Activated naive CD4-positive, alpha-beta T cell treated with anti-CD3 and anti-CD28 coated beads for 36 hours (primary cell): ENCODE measurements at regions of chr18 and their contacts with region 1.

Region 1: GRCh38 chr18:46917108-46917802 is at the starts of genes KATNAL2 and PIAS2:
- DNase-seq: peak; percentile 71
- H3K4me3 Mint-ChIP-seq: peak within 1 kb of the TSS; percentile 86
- H3K27ac Mint-ChIP-seq: peak within 1 kb of the TSS; percentile 86
- H3K4me1 Mint-ChIP-seq: peaks cover 48% of the 10 kb centered on the region
- H3K27me3 Mint-ChIP-seq: no peaks in the 10 kb centered on the region
- total RNA-seq, gene KATNAL2: 0.45 to 0.52 TPM
- total RNA-seq, gene PIAS2: 21.9 to 23.4 TPM

Region 2: DNA sequence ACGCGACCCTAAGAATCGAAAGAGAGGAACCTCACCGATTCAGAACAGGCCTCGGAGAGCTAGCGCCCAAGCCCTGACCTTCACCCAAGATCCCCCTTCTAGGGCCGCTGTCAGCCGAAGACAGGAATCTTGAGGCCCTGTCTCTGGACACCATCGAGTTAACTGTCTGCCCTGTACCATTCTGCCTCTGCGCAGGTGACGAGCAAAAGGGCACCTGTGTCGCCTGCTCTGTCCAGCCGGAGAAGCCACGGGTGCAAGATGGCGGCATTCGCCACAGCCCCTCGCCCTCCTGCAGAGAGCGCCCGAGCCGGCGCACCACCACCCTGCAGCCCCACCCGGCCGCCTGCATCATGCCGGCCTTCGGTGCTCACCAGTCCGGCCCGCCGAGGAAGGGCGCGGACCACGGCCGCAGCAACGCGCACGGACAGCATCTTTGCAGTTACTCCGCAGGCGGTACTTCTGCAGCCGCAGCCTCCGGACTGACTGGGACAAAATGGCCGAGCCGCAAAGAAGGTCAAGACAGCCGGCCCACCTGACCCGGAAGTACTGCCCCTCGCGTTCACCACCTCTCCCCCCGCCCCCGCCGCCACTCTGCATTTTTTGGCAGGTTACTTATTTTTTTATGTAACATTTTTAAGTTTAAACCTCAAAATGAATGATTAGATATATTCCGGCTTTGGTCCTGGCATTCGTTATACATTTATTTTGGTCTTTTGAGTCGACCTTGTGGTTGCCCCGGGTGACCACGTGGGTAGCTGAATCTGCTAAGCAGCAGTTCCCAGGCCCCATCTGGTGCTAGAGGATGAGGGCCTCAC is 819.2 kb before region 1 on chr18 and contains the start of gene ATP5F1A:
- CTCF ChIA-PET with region 1: no interaction called
- intact Hi-C with region 1: loop called (anchors 5 kb)
- DNase-seq: peak; percentile 93
- H3K4me3 Mint-ChIP-seq: peak within 1 kb of the TSS; percentile 98
- H3K27ac Mint-ChIP-seq: peak within 1 kb of the TSS; percentile 94
- H3K4me1 Mint-ChIP-seq: peaks cover 36% of the 10 kb centered on the region
- H3K27me3 Mint-ChIP-seq: no peaks in the 10 kb centered on the region
- total RNA-seq, gene ATP5F1A: 467 TPM

Region 3: DNA sequence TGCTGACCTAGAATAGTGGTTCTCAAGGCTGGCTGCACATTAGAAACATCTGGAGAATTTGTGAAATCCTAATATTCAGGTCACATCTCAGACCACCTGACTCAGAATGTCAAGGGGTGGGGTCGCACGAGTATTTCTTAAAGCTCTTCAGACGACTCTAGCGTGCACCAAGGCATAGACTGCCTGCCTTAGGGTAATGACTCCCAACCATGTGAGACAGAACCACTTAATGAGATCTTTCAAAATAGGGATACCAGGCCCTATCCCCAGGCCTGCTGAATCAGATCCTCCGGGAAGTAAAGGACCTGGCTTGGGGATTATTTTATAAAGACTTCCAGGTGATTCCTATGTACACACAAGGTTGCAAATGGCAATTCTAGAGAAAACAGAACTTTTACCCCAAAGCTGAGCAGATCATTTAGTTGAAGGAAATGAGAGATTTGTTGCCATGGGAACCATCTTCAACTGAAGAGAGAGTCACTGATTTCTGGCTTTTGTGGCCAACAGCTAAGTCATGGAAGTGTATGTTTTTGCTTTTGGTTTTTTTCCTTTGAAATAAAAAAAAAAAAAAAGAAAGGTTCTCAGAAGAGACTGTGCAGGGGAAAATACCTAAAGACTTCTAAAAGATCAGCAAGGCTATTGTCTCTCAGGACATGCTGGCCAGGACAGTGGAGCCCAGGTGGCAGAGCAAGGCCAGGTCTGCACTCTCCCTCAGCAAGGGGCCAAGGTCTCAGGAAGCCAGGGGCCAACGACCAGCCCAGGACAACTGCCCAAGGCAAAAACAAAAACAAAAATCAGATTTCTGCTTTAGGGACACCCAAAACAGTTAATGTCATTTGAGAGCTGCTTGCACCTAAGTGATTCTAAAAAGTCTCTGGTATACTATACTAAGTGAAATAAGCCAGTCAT is 244.9 kb before region 1 on chr18:
- CTCF ChIA-PET with region 1: no interaction called
- intact Hi-C with region 1: loop called (anchors 2 kb)
- DNase-seq: peak; percentile 26
- H3K4me3 Mint-ChIP-seq: no peak overlapping the region
- H3K27ac Mint-ChIP-seq: no peak overlapping the region
- H3K4me1 Mint-ChIP-seq: peaks cover 11% of the 10 kb centered on the region
- H3K27me3 Mint-ChIP-seq: no peaks in the 10 kb centered on the region

Region 4: DNA sequence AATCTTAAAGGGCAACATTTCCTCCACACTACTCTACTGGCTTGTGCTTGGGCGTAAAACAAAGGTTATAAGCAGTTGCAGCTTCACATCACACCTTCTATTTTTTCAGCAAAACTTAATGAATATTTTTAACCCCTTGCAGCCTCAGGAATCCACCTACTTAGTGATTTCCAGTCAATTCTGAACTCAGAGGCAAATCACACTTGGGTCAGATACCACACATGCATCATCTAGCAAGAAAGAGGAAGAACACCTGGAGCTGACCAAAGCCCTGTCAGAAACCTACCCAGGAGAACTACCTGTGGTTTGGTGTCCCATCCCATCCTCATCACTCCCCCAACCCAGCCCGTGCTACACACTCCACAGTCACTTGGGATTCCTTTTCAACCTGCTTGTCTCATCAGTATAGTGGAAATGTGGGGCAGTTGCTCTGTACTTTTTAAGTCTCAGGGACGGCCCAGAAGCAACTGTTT is 25.5 kb before region 1 on chr18:
- CTCF ChIA-PET with region 1: no interaction called
- intact Hi-C with region 1: loop called (anchors 1 kb)
- DNase-seq: peak; percentile 43
- H3K4me3 Mint-ChIP-seq: no peak overlapping the region
- H3K27ac Mint-ChIP-seq: peak overlapping the region; percentile 30
- H3K4me1 Mint-ChIP-seq: peaks cover 42% of the 10 kb centered on the region
- H3K27me3 Mint-ChIP-seq: no peaks in the 10 kb centered on the region

Region 5: DNA sequence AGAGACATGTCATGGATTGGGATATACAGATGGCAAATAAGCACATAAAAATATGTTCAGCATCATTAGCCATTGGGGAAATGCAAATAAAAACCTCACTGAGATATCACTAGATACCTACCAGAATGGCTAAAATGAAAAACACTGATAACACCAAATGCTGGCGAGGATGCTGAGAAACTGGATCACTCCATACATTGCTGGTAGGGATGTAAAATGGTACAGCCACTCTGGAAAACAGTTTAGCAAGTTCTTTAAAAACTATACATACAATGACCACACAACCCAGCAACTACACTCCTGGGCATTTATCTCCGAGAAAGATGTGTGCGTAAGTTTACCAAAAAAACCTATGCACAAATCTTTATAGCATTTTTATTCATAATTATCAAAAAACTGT is 13.8 kb before region 1 on chr18:
- CTCF ChIA-PET with region 1: no interaction called
- intact Hi-C with region 1: no loop called
- DNase-seq: no peak
- H3K4me3 Mint-ChIP-seq: no peak overlapping the region
- H3K27ac Mint-ChIP-seq: no peak overlapping the region
- H3K4me1 Mint-ChIP-seq: peaks cover 22% of the 10 kb centered on the region
- H3K27me3 Mint-ChIP-seq: no peaks in the 10 kb centered on the region

Region 6: DNA sequence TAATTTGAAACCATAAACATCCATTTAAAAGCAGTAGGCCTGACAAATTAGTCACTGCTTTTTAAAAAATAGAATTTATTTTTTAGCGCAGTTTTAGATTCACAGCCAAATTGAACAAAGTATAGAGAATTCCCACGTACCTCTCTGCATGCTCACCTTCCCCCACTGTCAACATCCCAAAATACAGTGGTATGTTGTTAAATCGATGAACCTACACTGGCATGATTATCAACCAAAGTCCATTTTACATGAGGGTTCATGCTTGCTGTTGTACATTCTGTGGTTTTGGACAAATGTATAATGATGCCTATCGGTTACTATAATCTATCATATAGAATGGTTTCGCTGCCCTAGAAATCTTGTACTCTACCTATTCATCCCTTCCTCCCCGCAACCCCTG is 123.7 kb after region 1 on chr18:
- CTCF ChIA-PET with region 1: no interaction called
- intact Hi-C with region 1: no loop called
- DNase-seq: no peak
- H3K4me3 Mint-ChIP-seq: no peak overlapping the region
- H3K27ac Mint-ChIP-seq: no peak overlapping the region
- H3K4me1 Mint-ChIP-seq: no peaks in the 10 kb centered on the region
- H3K27me3 Mint-ChIP-seq: peaks cover 5% of the 10 kb centered on the region

Region 7: GRCh38 chr18:47150029-47150823 is 233.0 kb after region 1 on chr18 and contains the start of gene HDHD2:
- CTCF ChIA-PET with region 1: no interaction called
- intact Hi-C with region 1: loop called (anchors 1 kb)
- DNase-seq: peak; percentile 83
- H3K4me3 Mint-ChIP-seq: peak within 1 kb of the TSS; percentile 95
- H3K27ac Mint-ChIP-seq: peak within 1 kb of the TSS; percentile 96
- H3K4me1 Mint-ChIP-seq: peaks cover 35% of the 10 kb centered on the region
- H3K27me3 Mint-ChIP-seq: no peaks in the 10 kb centered on the region
- total RNA-seq, gene HDHD2: 32.8 to 33.9 TPM